AG04449 (cell line): ENCODE measurements at regions of chr15 and their contacts with region 1.

Region 1: DNA sequence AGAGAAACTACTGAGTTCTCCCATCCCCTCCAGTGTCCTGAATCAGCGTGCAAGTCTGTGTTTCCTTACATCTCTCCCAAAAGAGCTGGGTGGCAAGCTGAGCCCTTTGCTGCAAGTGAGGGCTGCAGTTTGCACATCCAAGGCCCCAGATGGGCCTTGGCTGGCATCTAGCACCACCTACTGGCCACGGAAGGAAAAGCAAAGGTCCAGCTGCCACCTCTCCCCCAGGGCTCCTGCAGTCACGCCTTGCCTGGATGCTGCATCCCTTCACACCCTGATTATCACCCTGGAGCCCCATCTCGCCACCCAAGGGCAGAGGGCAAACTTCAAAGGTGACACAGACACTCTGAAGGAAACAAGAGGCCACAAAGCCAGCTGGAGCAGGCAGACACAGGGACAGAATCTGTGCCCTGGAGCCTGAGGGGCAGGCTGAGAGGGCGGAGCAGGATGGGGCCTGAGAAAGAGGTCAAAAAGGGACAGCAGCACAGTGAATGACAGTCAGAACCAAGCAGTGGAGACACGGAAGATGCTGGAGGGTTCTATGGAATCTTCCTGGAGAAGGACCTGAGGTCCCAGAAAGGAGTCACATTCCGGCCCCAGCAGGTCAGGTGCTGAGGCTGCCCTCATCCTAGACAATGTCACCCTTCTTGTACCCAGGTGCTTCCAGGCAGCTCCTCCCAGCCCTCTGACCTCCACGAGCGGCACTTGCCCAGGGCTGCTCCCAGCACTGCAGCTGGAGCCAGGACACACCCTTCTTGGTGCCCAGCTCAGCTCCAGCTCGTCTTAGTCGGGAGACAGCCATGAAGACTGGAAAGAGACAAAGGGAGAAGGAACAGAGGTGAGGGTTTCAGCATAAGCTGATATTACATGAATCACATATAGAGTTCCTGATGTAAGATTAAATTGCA is 18.3 kb upstream of the NTRK3 start:
- DNase-seq: no peak
- H3K4me3 ChIP-seq: no peak overlapping the region
- CTCF ChIP-seq: peak; percentile 91

Region 2: DNA sequence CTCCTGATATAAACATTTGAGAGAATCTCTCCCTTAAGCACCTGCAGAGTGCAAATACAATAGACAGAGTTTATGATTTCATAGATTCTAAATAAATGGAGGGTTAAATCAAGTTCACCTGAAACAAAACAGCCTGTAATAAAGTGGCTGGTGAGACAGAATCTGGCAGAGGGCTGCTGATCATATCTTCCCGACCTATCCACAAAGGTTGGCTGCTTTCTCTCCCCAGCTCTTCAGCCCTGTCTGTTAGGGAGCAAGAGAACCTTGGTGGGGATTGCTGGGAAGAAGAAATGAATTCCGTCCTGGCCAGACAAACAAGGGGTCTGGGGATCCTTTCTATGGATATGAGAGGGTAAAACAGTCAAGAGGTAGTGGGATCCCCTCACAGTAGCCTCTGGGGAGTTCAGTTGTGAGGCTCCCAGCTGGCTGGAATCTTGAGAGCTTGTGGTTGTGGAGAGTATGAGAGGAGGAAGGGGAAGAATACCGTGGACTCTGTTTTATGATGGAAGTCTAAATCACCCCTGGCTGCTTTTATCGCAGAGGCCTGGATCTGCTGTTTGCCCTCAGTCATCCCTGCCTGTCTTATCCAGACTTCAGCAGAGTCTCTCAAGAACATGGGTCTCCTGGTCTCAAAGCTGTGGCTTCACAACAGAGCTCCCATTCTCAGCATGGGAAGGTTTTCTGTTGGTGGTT is 469.5 kb before region 1 on chr15:
- CTCF ChIA-PET with region 1: no interaction called
- POLR2A ChIA-PET with region 1: no interaction called
- DNase-seq: no peak
- H3K4me3 ChIP-seq: no peak overlapping the region
- CTCF ChIP-seq: no peak

Region 3: DNA sequence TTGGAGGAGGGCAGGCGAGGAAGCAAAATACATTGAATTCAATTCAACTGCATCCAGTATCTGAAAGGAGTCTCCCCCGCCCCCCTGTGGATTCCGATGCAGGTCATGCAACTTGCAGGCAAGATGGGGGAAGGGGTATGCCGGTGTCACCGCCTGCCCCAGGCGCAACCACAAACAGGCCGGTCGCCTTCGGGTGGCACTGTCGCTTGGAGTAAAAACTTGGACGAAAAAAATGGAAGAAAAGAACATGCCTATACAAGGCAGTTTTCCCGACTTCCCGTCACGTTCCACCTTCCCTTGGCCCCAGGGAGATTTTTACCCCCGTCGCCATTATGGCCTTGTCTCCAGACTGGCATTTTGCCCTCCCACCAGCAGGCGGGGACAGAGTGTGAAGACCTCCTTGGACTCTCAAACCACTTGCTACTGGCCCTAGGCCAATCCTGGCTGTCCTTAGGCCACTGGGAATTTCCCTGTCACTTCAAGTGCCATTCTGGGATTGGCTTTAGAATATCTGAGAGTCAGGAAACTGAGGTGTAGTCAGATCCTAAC is 16.6 kb before region 1 on chr15:
- CTCF ChIA-PET with region 1: interaction called, 104 read pairs
- POLR2A ChIA-PET with region 1: no interaction called
- DNase-seq: no peak
- H3K4me3 ChIP-seq: no peak overlapping the region
- CTCF ChIP-seq: no peak

Region 4: GRCh38 chr15:88312941-88313579 is 38.3 kb after region 1 on chr15:
- CTCF ChIA-PET with region 1: interaction called, 12 read pairs
- POLR2A ChIA-PET with region 1: no interaction called
- DNase-seq: peak; percentile 36
- H3K4me3 ChIP-seq: no peak overlapping the region
- CTCF ChIP-seq: no peak

Region 5: DNA sequence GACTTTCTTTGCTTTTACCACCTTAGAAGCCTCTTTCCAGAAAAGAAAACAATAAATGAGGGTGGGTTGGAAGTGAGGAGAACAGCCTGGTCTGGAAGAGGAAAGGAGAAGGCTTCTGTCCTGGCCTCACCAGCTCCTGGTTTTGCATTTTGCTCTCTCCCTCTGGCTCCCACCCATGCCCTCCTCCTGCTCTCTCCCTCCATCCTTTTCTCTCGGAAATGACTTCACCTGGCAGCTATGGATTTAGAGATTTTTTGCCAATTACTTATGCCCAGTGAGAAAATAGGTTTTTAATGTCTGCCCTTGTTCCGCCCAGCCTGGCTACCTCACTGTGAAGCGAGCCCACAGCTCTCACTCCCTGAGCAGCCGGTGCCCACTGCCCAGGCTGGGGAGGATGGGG is 59.6 kb after region 1 on chr15:
- CTCF ChIA-PET with region 1: interaction called, 10 read pairs
- POLR2A ChIA-PET with region 1: no interaction called
- DNase-seq: peak; percentile 40
- H3K4me3 ChIP-seq: no peak overlapping the region
- CTCF ChIP-seq: no peak

Region 6: GRCh38 chr15:88365124-88365523 is 90.3 kb after region 1 on chr15:
- CTCF ChIA-PET with region 1: no interaction called
- POLR2A ChIA-PET with region 1: no interaction called
- DNase-seq: no peak
- H3K4me3 ChIP-seq: no peak overlapping the region
- CTCF ChIP-seq: no peak

Region 7: GRCh38 chr15:88586401-88587162 is 311.8 kb after region 1 on chr15:
- CTCF ChIA-PET with region 1: no interaction called
- POLR2A ChIA-PET with region 1: no interaction called
- DNase-seq: no peak
- H3K4me3 ChIP-seq: no peak overlapping the region
- CTCF ChIP-seq: no peak